Activated CD4-positive, alpha-beta memory T cell treated with anti-CD3 and anti-CD28 coated beads, Interleukin-2, amount 10 ng/mL, durations not matched to agents 7 days and 5 days (primary cell): ENCODE measurements at regions of chr2 and their contacts with region 1.

Region 1: GRCh38 chr2:241110607-241111439 is 8.7 kb upstream of the MTERF4 start:
- DNase-seq: no peak
- H3K4me3 Mint-ChIP-seq: peak overlapping the region; percentile 73
- H3K27ac Mint-ChIP-seq: peak overlapping the region; percentile 98
- H3K4me1 Mint-ChIP-seq: peaks cover 47% of the 10 kb centered on the region
- H3K27me3 Mint-ChIP-seq: no peaks in the 10 kb centered on the region

Region 2: DNA sequence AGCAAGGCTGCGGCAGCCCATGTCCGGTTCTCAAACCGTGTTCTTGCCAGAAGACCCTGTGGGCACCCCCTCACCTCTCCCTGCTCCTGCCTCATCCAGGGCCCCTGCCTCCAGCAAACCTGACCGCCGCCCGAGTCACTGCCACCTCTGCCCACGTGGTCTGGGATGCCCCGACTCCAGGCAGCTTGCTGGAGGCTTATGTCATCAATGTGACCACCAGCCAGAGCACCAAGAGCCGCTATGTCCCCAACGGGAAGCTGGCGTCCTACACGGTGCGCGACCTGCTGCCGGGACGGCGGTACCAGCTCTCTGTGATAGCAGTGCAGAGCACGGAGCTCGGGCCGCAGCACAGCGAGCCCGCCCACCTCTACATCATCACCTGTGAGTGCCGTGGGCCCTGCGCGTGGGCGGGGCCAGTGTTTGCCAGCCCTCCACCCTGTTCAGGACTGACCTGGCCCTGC is 41.0 kb before region 1 on chr2:
- CTCF ChIA-PET with region 1: no interaction called
- POLR2A ChIA-PET with region 1: no interaction called
- DNase-seq: peak; percentile 14
- H3K4me3 Mint-ChIP-seq: no peak overlapping the region
- H3K27ac Mint-ChIP-seq: no peak overlapping the region
- H3K4me1 Mint-ChIP-seq: no peaks in the 10 kb centered on the region
- H3K27me3 Mint-ChIP-seq: no peaks in the 10 kb centered on the region

Region 3: GRCh38 chr2:241095594-241096286 is 15.1 kb before region 1 on chr2:
- CTCF ChIA-PET with region 1: no interaction called
- POLR2A ChIA-PET with region 1: interaction called, 10 read pairs
- DNase-seq: peak; percentile 53
- H3K4me3 Mint-ChIP-seq: no peak overlapping the region
- H3K27ac Mint-ChIP-seq: peak overlapping the region; percentile 64
- H3K4me1 Mint-ChIP-seq: peaks cover 54% of the 10 kb centered on the region
- H3K27me3 Mint-ChIP-seq: no peaks in the 10 kb centered on the region

Region 4: DNA sequence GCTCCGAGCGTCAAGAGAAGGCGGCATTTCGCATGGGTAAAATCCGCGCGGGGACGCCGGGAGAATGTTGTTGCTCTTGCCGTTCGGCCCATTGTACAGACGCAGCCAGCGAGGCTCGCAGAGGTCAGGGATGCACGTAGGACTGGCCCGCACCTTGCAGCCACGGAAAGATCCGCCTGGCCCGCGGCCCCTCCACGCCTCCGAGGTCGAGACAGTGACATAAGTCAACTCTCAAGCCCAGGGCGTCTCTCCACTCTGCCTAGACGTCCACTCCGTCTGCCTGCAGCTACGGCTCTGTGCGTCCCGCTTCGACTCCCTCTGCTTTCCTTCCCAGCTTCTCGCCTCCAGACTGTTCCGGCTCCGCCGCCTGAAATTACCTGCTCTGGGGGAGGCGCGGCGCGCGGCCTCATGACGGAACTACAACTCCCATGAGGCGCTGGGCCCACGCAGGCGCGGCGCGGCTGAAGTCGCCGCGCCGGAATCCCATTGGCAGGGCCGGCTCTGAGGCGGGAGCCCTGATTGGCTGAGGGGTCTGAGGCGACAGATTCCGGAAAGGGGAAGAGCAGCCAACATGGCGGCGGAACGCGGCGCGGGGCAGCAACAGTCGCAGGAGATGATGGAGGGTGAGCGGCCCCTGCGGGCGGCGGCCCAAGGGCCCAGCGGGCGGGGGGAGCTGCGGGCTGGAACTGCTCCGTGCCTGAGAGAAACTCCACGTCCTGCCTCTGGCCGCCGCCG is 39.3 kb after region 1 on chr2 and contains the start of gene PPP1R7:
- CTCF ChIA-PET with region 1: interaction called, 3 read pairs
- POLR2A ChIA-PET with region 1: interaction called, 17 read pairs
- DNase-seq: peak; percentile 97
- H3K4me3 Mint-ChIP-seq: peak within 1 kb of the TSS; percentile 92
- H3K27ac Mint-ChIP-seq: peak within 1 kb of the TSS; percentile 84
- H3K4me1 Mint-ChIP-seq: peaks cover 47% of the 10 kb centered on the region
- H3K27me3 Mint-ChIP-seq: no peaks in the 10 kb centered on the region
- total RNA-seq, gene PPP1R7: 103 to 106 TPM